Transverse colon (tissue), 4 donors: ENCODE measurements at regions of chr4 and their contacts with region 1.

Region 1: DNA sequence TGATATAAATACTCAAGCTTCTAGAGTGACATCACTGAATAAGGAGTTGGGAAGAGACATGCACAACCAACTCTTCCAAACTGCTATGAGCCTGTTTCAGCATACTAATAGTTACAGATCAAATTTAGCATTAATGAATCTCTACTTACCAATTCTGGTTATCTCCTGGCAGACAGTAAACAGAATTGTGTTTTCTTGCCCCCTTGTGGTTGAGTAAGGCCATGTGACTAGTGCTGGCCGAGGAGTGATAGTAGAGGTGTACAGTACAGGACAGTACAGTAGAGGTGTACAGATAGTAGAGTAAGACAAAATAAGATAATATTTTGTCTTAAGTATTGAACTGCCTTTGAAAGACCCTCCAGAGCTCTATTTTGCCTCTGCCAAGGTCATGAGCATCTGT is 681.4 kb downstream of the GABRG1 start:
- DNase-seq: no peak
- H3K4me3 ChIP-seq: no peak overlapping the region
- H3K27ac ChIP-seq: no peak overlapping the region
- H3K4me1 ChIP-seq: no peaks in the 10 kb centered on the region
- H3K27me3 ChIP-seq: no peaks in the 10 kb centered on the region
- CTCF ChIP-seq: peak in 2 of 5 experiments; percentile 15 to 24
- EP300 ChIP-seq: no peak
- POLR2A ChIP-seq: no peak

Region 2: GRCh38 chr4:44760142-44760898 is 682.1 kb before region 1 on chr4:
- in situ Hi-C with region 1: loop called in 1 of 4 experiments (anchors 25 kb)
- intact Hi-C with region 1: no loop called
- DNase-seq: no peak
- H3K4me3 ChIP-seq: no peak overlapping the region
- H3K27ac ChIP-seq: no peak overlapping the region
- H3K4me1 ChIP-seq: peaks cover 0 to 4% (median 0%) of the 10 kb centered on the region in 4 donors
- H3K27me3 ChIP-seq: peaks cover 7% of the 10 kb centered on the region
- CTCF ChIP-seq: peak in 4 of 5 experiments; percentile 39 to 55 (median 44)
- EP300 ChIP-seq: no peak
- POLR2A ChIP-seq: no peak

Region 3: GRCh38 chr4:45971108-45971507 is 528.6 kb after region 1 on chr4:
- in situ Hi-C with region 1: no loop called
- intact Hi-C with region 1: no loop called
- DNase-seq: no peak
- H3K4me3 ChIP-seq: no peak overlapping the region
- H3K27ac ChIP-seq: no peak overlapping the region
- H3K4me1 ChIP-seq: no peaks in the 10 kb centered on the region
- H3K27me3 ChIP-seq: no peaks in the 10 kb centered on the region
- CTCF ChIP-seq: no peak
- EP300 ChIP-seq: no peak
- POLR2A ChIP-seq: no peak